AG04450 (cell line): ENCODE measurements at regions of chr11 and their contacts with region 1.

Region 1: GRCh38 chr11:128630367-128631230 is 43.2 kb upstream of the ETS1 start:
- DNase-seq: peak; percentile 76
- H3K4me3 ChIP-seq: no peak overlapping the region
- H3K27ac ChIP-seq: no peak overlapping the region
- H3K27me3 ChIP-seq: peaks cover under 1% of the 10 kb centered on the region
- CTCF ChIP-seq: peak; percentile 94

Region 2: GRCh38 chr11:128180446-128181087 is 450.0 kb before region 1 on chr11:
- CTCF ChIA-PET with region 1: interaction called, 295 read pairs
- POLR2A ChIA-PET with region 1: no interaction called
- DNase-seq: peak; percentile 56
- H3K4me3 ChIP-seq: no peak overlapping the region
- H3K27ac ChIP-seq: no peak overlapping the region
- H3K27me3 ChIP-seq: no peaks in the 10 kb centered on the region
- CTCF ChIP-seq: no peak

Region 3: GRCh38 chr11:128323381-128323780 is 307.2 kb before region 1 on chr11:
- CTCF ChIA-PET with region 1: interaction called, 17 read pairs
- POLR2A ChIA-PET with region 1: no interaction called
- DNase-seq: no peak
- H3K4me3 ChIP-seq: no peak overlapping the region
- H3K27ac ChIP-seq: no peak overlapping the region
- H3K27me3 ChIP-seq: no peaks in the 10 kb centered on the region
- CTCF ChIP-seq: peak; percentile 46

Region 4: DNA sequence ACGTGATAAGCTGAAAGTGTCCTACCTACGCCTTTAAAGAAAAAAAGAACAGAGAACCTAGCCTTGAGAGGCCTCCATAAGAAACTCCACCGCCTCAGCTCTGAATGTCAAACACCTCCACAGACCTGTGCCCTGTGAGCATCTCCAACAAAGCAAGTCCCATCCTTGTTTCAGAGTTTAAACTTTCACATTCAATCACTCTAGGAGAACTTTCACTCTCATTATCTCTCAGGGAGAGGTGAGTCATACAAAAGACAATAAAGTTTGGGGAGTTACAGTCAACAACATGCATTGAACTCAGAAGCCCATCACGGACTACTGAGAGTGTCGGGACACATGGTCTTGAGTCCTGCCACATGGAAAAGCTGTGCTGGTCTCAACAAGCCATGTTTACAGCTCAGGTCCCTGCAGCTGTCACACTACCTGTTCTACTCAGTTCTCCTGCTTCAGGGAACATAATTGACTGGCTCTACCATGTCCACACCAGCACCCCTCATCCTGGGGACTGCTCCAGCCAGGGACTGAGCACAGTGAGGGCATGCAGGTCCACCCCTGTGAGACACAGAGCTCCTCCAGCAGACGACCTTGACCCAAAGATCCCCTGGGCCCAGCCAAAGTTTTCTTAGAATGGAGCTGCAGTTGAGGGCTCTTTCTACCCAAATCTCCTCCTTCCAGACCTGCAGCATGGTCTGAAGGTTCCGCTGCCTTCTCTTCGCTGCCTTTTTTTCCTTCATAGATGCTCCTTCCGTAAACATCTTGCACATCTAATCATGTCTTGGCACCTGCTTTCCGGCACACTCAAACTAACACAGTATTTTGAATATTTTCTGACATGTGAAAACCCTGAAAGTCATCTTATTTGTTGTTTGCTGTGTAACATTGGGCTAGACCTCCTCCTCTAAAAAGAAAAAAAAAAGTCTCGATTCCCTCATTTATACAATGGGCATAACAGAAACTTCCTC is 158.2 kb before region 1 on chr11:
- CTCF ChIA-PET with region 1: interaction called, 22 read pairs
- POLR2A ChIA-PET with region 1: no interaction called
- DNase-seq: no peak
- H3K4me3 ChIP-seq: no peak overlapping the region
- H3K27ac ChIP-seq: peak overlapping the region; percentile 40
- H3K27me3 ChIP-seq: no peaks in the 10 kb centered on the region
- CTCF ChIP-seq: no peak

Region 5: DNA sequence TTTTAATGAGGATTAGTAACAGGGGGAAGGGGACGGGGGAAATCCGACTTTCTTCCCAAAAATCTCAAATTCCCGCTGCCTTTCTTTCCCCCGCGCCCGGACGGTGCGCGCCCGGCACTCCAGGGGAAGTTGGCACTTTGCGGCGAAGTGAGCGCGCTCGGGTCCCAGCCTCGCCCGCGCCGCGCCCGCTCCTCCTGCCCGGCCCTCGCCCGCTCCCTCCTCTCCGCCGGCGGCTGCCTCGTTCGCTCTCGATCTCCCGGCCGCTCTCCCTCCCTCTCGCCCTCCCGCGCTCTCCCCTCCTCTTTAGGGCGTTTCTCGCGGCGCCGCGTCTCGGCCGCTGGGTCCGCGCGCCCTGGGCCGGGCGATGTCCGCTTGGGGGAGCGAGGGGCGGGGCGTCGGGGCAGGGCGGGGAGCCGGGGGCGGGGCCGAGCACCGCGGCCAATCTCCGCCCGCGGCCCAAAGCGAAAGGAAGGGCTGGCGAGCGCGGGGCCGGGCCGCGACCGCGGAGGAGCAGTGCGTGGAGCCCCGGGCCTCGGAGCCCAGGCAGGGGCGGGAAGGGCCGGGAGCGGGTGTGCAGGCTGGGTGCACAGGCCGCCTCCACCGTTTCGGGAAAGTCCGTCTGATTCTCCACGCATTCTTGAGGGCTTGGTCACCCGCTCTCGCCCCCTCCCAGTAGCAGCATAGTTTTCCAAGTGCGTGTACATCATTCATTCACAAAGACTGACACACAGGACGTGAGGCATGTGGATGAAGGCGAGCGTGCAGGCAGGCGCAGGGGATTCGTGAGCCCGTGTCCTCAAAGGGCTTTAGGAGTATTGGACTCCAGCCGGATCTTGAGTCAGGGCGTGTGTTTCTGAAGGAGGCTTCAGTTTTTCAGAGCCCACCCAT is 108.3 kb before region 1 on chr11:
- CTCF ChIA-PET with region 1: interaction called, 45 read pairs
- POLR2A ChIA-PET with region 1: no interaction called
- DNase-seq: peak; percentile 98
- H3K4me3 ChIP-seq: peak overlapping the region; percentile 86
- H3K27ac ChIP-seq: peak overlapping the region; percentile 99
- H3K27me3 ChIP-seq: no peaks in the 10 kb centered on the region
- CTCF ChIP-seq: no peak

Region 6: DNA sequence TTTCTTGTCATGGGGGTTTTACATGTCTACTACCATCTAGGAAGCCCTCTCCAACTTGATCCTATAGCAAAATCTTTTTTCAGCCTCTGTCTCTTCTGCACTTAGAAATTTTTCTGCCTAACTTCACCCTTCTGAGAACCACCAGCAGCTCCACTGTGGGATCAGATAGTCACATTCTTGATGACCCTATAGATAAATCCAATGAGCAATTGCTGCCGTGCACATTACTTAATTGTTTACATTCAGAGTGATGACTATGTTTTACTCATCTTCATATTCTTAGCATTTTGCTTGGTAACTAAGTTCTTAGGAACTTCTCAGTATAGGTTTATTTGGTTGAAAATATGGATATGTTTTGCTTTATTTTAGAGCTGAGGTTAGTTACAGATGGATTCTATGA is 30.9 kb before region 1 on chr11:
- CTCF ChIA-PET with region 1: interaction called, 11 read pairs
- POLR2A ChIA-PET with region 1: no interaction called
- DNase-seq: peak; percentile 11
- H3K4me3 ChIP-seq: no peak overlapping the region
- H3K27ac ChIP-seq: no peak overlapping the region
- H3K27me3 ChIP-seq: no peaks in the 10 kb centered on the region
- CTCF ChIP-seq: no peak